Endothelial cell of umbilical vein (primary cell): ENCODE measurements at regions of chr1 and their contacts with region 1.

Region 1: GRCh38 chr1:51313961-51314777 is 16.2 kb downstream of the TTC39A start:
- DNase-seq: peak; percentile 94
- H3K4me3 ChIP-seq: no peak overlapping the region
- H3K27ac ChIP-seq: peak overlapping the region; percentile 93
- H3K4me1 ChIP-seq: peaks cover 34% of the 10 kb centered on the region
- H3K27me3 ChIP-seq: no peaks in the 10 kb centered on the region
- CTCF ChIP-seq: no peak
- POLR2A ChIP-seq: peak; percentile 46

Region 2: DNA sequence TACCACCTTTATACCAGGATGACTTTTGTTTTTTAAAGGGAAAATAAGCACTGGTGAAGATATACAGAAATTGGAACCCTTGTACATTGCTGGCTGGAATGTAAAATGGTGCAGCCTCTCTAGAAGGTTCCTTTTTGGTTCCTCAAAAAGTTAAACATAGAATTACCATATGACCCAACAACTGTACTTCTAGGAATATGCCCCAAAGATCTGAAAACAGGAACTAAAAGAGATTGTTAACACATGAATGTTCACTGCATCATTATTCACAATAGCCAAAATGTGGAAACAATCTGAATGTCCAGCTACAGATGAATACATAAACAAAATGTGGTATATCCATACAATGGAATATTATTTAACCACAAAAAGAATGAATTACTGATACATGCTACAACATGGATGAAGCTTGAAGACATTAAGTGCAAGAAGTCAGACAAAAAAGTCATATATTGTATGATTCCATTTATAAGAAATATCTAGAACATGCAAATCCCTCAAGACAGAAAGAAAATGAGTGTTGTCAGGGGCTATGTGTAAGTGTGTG is 806.1 kb before region 1 on chr1:
- CTCF ChIA-PET with region 1: no interaction called
- POLR2A ChIA-PET with region 1: no interaction called
- dilution Hi-C with region 1: no loop called
- intact Hi-C with region 1: no loop called
- DNase-seq: no peak
- H3K4me3 ChIP-seq: no peak overlapping the region
- H3K27ac ChIP-seq: no peak overlapping the region
- H3K4me1 ChIP-seq: no peaks in the 10 kb centered on the region
- H3K27me3 ChIP-seq: no peaks in the 10 kb centered on the region
- CTCF ChIP-seq: no peak
- POLR2A ChIP-seq: no peak

Region 3: DNA sequence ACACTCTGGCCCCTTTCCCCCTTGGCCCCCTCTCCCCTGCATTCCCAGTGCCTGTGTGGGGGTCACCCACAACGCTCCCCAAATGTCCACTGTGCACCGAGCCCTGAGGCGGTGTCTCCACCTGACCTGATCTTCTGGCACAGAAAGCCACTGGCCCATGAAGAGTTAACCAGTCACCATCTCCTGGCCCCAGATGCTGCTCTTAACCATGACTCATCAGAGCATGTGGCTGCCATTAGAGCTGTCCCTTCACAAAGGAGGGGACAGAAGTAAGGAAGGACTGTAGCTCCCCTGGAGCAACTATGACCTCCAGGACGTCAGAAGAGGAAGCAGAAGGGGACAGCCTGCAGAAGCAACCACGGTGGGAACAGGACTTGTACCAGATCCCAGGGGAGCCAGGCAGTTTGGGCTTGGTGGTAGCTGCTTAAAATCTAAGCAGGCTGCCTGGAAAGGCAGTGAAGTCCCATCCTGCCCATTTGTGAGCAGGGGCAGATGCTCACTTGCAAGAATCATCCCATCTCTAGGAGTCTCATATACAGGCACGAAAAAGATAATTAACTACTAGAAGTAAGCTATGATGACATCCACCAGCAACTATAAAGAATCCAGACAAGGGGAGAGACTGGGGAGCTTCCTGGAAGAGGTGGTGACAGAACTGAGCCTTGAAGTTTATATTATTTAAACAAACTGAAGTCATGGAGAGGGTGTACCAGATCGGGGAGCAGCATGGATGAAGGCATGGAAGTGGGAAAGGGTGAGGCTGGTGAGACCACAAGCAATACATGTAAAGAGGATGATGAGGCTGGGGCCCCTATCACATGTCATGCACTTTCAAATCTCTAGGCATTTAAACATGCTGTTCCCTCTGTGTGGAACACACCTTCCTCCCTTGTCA is 17.3 kb after region 1 on chr1:
- CTCF ChIA-PET with region 1: interaction called, 3 read pairs
- POLR2A ChIA-PET with region 1: no interaction called
- dilution Hi-C with region 1: no loop called
- intact Hi-C with region 1: loop called (anchors 2 kb)
- DNase-seq: peak; percentile 41
- H3K4me3 ChIP-seq: no peak overlapping the region
- H3K27ac ChIP-seq: no peak overlapping the region
- H3K4me1 ChIP-seq: peaks cover 5% of the 10 kb centered on the region
- H3K27me3 ChIP-seq: peaks cover 0 to 2% of the 10 kb centered on the region in 2 experiments
- CTCF ChIP-seq: no peak
- POLR2A ChIP-seq: no peak